HepG2 (cell line): ENCODE measurements at regions of chr2 and their contacts with region 1.

Region 1: GRCh38 chr2:20186078-20186854 is 38.7 kb downstream of the SDC1 start:
- DNase-seq: peak; percentile 94
- ATAC-seq: peak; percentile 59
- H3K4me3 ChIP-seq: peak overlapping the region; percentile 38 to 67 (median 41); a peak in 5 of 6 replicates
- H3K27ac ChIP-seq: peak overlapping the region; percentile 52
- H3K4me1 ChIP-seq: peaks cover 95% of the 10 kb centered on the region
- H3K27me3 ChIP-seq: no peaks in the 10 kb centered on the region
- CTCF ChIP-seq: no peak
- EP300 ChIP-seq: peak; percentile 39 to 46; a peak in 2 of 4 replicates
- POLR2A ChIP-seq: peak in 1 of 2 experiments; percentile 79; a peak in 2 of 4 replicates
- RAD21 ChIP-seq: no peak

Region 2: DNA sequence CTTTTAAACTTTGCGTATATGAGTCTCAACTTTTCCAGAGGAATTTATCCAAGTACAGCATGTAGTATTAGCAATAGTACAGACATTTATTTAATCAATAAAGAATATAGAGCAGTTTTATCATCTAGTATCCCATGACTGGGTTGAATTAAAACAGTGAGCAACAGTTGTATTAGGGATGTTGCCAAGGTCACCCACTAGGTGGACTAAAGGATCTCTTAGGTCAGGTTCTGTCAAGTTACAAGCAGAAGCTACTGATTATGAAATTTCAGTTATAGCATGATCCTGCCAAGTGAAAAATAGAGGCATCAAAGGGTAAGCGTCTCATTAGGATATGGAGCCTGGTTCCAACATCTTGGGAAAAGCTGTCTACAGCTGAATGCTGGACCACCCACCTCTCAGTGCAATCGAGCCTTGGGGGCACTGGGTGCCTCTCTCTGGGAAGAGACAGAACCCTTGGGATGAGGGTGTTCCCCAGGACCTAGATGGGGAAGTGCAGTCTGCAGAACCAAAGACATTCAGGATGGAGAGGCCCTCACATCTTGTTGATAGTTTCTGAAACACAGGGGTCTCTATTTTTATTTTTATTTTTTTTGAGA is 82.7 kb before region 1 on chr2:
- CTCF ChIA-PET with region 1: interaction called, 4 read pairs
- POLR2A ChIA-PET with region 1: interaction called, 7 read pairs
- in situ Hi-C with region 1: no loop called
- intact Hi-C with region 1: loop called (anchors 5 kb)
- DNase-seq: peak; percentile 65
- ATAC-seq: peak; percentile 65
- H3K4me3 ChIP-seq: no peak overlapping the region
- H3K27ac ChIP-seq: no peak overlapping the region
- H3K4me1 ChIP-seq: peaks cover 46% of the 10 kb centered on the region
- H3K27me3 ChIP-seq: no peaks in the 10 kb centered on the region
- CTCF ChIP-seq: peak; percentile 75
- EP300 ChIP-seq: no peak
- POLR2A ChIP-seq: no peak
- RAD21 ChIP-seq: peak; percentile 74

Region 3: GRCh38 chr2:20135631-20136050 is 50.6 kb before region 1 on chr2:
- CTCF ChIA-PET with region 1: interaction called, 19 read pairs
- POLR2A ChIA-PET with region 1: no interaction called
- in situ Hi-C with region 1: no loop called
- intact Hi-C with region 1: loop called (anchors 1 kb)
- DNase-seq: peak; percentile 74
- ATAC-seq: peak; percentile 83
- H3K4me3 ChIP-seq: no peak overlapping the region
- H3K27ac ChIP-seq: no peak overlapping the region
- H3K4me1 ChIP-seq: peaks cover 61% of the 10 kb centered on the region
- H3K27me3 ChIP-seq: peaks cover 3 to 63% of the 10 kb centered on the region in 2 experiments; a peak in 4 of 5 replicates
- CTCF ChIP-seq: peak; percentile 99
- EP300 ChIP-seq: no peak
- POLR2A ChIP-seq: no peak
- RAD21 ChIP-seq: peak; percentile 94

Region 4: GRCh38 chr2:20164061-20164733 is 22.1 kb before region 1 on chr2:
- CTCF ChIA-PET with region 1: no interaction called
- POLR2A ChIA-PET with region 1: interaction called, 3 read pairs
- in situ Hi-C with region 1: no loop called
- intact Hi-C with region 1: loop called (anchors 1 kb)
- DNase-seq: no peak
- ATAC-seq: peak; percentile 70
- H3K4me3 ChIP-seq: no peak overlapping the region
- H3K27ac ChIP-seq: no peak overlapping the region
- H3K4me1 ChIP-seq: peaks cover 33% of the 10 kb centered on the region
- H3K27me3 ChIP-seq: 0 out of 5 replicates have a peak, but pooled peaks cover 0 to 1% of the 10 kb centered on the region in 2 experiments
- CTCF ChIP-seq: no peak
- EP300 ChIP-seq: no peak
- POLR2A ChIP-seq: no peak
- RAD21 ChIP-seq: no peak

Region 5: DNA sequence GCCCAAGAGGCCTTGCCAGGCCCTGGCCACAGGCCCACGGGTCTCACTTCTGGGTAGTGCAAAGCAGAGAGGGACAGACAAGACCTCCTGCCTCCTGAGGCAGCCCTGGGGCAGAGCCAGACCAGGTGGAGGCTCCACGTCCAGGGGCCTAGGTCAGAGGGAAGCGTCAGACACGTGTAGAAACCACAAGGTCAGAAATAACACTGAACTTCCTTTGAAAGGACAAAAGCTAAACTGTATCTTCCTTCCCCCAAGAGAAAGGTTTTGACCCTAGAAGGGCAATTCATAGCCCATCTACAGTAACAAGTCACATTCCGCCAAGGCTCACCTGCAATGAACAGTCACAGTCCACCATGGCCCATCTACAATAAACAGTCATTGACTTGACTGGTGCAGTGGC is 20.8 kb after region 1 on chr2:
- CTCF ChIA-PET with region 1: no interaction called
- POLR2A ChIA-PET with region 1: interaction called, 38 read pairs
- in situ Hi-C with region 1: no loop called
- intact Hi-C with region 1: loop called (anchors 2 kb)
- DNase-seq: no peak
- ATAC-seq: peak; percentile 1; the same call in 2 of the 3 replicates
- H3K4me3 ChIP-seq: no peak overlapping the region
- H3K27ac ChIP-seq: peak overlapping the region; percentile 70
- H3K4me1 ChIP-seq: peaks cover 73% of the 10 kb centered on the region
- H3K27me3 ChIP-seq: no peaks in the 10 kb centered on the region
- CTCF ChIP-seq: no peak
- EP300 ChIP-seq: peak in 1 of 2 experiments; percentile 20; a peak in 1 of 4 replicates
- POLR2A ChIP-seq: no peak
- RAD21 ChIP-seq: no peak

Region 6: GRCh38 chr2:20212459-20212870 is 26.2 kb after region 1 on chr2:
- CTCF ChIA-PET with region 1: no interaction called
- POLR2A ChIA-PET with region 1: interaction called, 38 read pairs
- in situ Hi-C with region 1: no loop called
- intact Hi-C with region 1: loop called (anchors 2 kb)
- DNase-seq: no peak
- ATAC-seq: peak; percentile 0; the same call in 1 of the 3 replicates
- H3K4me3 ChIP-seq: peak overlapping the region in 1 of 3 experiments; percentile 39; a peak in 1 of 6 replicates
- H3K27ac ChIP-seq: peak overlapping the region; percentile 83
- H3K4me1 ChIP-seq: peaks cover 100% of the 10 kb centered on the region
- H3K27me3 ChIP-seq: no peaks in the 10 kb centered on the region
- CTCF ChIP-seq: no peak
- EP300 ChIP-seq: no peak
- POLR2A ChIP-seq: no peak
- RAD21 ChIP-seq: no peak